Mammary epithelial cell (primary cell): ENCODE measurements at regions of chr16 and their contacts with region 1.

Region 1: GRCh38 chr16:10971560-10971961 is 27.2 kb downstream of the CLEC16A start:
- DNase-seq: peak; percentile 69
- H3K4me3 ChIP-seq: no peak overlapping the region
- H3K27ac ChIP-seq: no peak overlapping the region
- H3K4me1 ChIP-seq: peaks cover 7% of the 10 kb centered on the region
- H3K27me3 ChIP-seq: no peaks in the 10 kb centered on the region
- CTCF ChIP-seq: peak; percentile 65 to 72

Region 2: DNA sequence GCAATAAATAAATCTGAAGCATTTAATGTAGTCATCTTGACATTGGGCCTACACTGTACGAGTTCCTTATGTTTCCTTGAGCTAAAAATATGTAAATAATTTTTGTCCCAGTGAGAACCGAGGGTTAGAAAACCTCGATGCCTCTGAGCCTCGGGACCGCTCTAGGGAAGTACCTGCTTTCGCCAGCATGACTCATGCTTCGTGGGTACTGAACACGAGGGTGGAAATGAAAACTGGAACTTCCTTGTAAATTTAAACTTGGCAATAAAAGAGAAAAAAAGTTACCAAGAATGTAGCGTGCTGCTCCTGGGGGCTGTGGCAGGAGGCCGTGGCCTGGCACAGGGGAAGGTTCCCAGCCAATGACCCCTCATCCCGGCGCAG is 210.3 kb after region 1 on chr16:
- CTCF ChIA-PET with region 1: no interaction called
- dilution Hi-C with region 1: no loop called
- in situ Hi-C with region 1: no loop called
- intact Hi-C with region 1: loop called (anchors 5 kb)
- DNase-seq: peak; percentile 44
- H3K4me3 ChIP-seq: no peak overlapping the region
- H3K27ac ChIP-seq: peak overlapping the region; percentile 33
- H3K4me1 ChIP-seq: peaks cover 26% of the 10 kb centered on the region
- H3K27me3 ChIP-seq: no peaks in the 10 kb centered on the region
- CTCF ChIP-seq: no peak

Region 3: DNA sequence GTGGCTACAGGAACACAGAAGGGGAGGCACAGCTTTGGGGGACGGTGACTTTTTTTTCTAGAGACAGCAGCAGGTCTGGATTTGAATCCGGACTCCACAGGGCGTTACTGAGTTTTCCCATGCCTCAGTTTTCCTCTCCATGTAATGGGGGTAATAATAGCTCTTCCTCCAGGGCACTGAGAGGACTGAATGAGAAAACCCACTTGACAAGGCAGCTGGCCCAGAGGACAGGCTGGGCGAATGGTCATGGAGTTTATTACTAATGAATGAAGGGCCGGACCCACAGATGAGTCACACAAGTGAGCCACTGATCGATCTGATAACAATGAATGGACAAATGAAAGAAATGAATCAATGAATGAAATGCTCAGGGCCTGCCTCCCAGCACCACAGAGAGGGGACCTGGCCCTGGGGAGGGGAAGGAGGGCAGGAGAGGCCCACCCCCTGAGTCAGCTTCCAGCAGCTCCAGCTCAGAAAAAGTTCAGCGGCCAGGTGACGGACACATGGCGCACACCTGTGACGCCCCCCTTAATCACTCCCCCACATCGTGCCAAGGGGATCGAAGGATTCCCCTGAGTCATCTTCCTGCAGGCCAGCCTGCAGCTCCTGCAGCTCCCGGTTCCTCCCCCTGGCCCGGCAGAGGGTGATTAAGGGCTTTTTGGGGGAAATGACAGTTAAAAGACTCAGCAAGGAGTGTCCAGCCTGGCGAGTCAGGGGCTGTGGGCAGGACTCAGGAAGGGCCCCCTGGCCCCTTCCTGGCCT is 230.1 kb after region 1 on chr16:
- CTCF ChIA-PET with region 1: no interaction called
- dilution Hi-C with region 1: no loop called
- in situ Hi-C with region 1: no loop called
- intact Hi-C with region 1: loop called (anchors 1 kb)
- DNase-seq: peak; percentile 98
- H3K4me3 ChIP-seq: peak overlapping the region in 1 of 3 experiments; percentile 2
- H3K27ac ChIP-seq: peak overlapping the region; percentile 92
- H3K4me1 ChIP-seq: peaks cover 47% of the 10 kb centered on the region
- H3K27me3 ChIP-seq: no peaks in the 10 kb centered on the region
- CTCF ChIP-seq: no peak